Endothelial cell of umbilical vein (primary cell): ENCODE measurements at regions of chr16 and their contacts with region 1.

Region 1: GRCh38 chr16:72832621-72833248 is 215.2 kb downstream of the ZFHX3 start:
- DNase-seq: peak; percentile 78
- H3K4me3 ChIP-seq: no peak overlapping the region
- H3K27ac ChIP-seq: no peak overlapping the region
- H3K4me1 ChIP-seq: no peaks in the 10 kb centered on the region
- H3K27me3 ChIP-seq: no peaks in the 10 kb centered on the region
- CTCF ChIP-seq: peak; percentile 97 to 99
- POLR2A ChIP-seq: no peak

Region 2: DNA sequence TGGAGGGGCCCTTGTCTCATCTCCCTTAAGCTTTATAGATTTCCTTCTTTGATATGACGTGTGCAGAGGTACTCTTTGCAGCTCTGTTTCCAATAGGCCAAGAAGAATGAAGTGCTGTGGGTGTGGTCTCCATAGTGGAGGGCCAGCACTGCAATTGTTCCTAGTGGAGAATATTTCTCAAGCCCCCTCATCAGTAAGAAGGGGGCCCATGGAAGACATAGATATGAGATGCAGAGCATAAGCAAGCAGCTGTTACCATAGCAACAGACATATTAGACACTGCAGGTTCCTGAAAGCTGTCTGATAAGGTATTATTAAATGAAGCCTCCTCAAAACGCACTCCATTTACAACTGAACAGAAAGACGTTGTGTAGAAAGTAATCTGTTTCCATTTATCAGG is 25.5 kb before region 1 on chr16:
- CTCF ChIA-PET with region 1: interaction called, 11 read pairs
- POLR2A ChIA-PET with region 1: no interaction called
- dilution Hi-C with region 1: no loop called
- intact Hi-C with region 1: no loop called
- DNase-seq: no peak
- H3K4me3 ChIP-seq: no peak overlapping the region
- H3K27ac ChIP-seq: no peak overlapping the region
- H3K4me1 ChIP-seq: no peaks in the 10 kb centered on the region
- H3K27me3 ChIP-seq: no peaks in the 10 kb centered on the region
- CTCF ChIP-seq: no peak
- POLR2A ChIP-seq: no peak

Region 3: GRCh38 chr16:72856797-72857196 is 24.1 kb after region 1 on chr16:
- CTCF ChIA-PET with region 1: interaction called, 46 read pairs
- POLR2A ChIA-PET with region 1: no interaction called
- dilution Hi-C with region 1: no loop called
- intact Hi-C with region 1: no loop called
- DNase-seq: no peak
- H3K4me3 ChIP-seq: no peak overlapping the region
- H3K27ac ChIP-seq: no peak overlapping the region
- H3K4me1 ChIP-seq: no peaks in the 10 kb centered on the region
- H3K27me3 ChIP-seq: no peaks in the 10 kb centered on the region
- CTCF ChIP-seq: peak; percentile 28 to 46
- POLR2A ChIP-seq: no peak

Region 4: DNA sequence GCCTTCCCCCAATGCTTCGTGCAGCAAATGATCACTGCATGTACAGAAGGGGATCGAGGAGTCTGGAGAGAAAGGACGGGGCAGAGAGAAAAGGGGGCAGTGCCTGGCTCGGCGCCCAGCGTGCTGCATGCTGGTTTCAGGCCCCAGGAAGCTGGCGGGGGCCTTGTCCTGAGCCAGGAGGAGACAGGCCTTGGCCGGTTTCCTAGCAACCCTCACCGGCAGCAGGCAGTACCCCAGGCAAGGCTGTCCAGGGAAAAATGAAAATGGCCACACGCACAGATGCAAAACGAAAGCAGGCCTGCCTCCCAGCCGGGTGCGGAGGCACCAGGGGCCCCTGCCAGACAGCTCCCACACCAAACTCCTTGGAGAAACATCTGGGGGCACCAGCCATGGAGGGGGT is 88.9 kb after region 1 on chr16:
- CTCF ChIA-PET with region 1: no interaction called
- POLR2A ChIA-PET with region 1: no interaction called
- dilution Hi-C with region 1: no loop called
- intact Hi-C with region 1: no loop called
- DNase-seq: no peak
- H3K4me3 ChIP-seq: no peak overlapping the region
- H3K27ac ChIP-seq: no peak overlapping the region
- H3K4me1 ChIP-seq: no peaks in the 10 kb centered on the region
- H3K27me3 ChIP-seq: no peaks in the 10 kb centered on the region
- CTCF ChIP-seq: no peak
- POLR2A ChIP-seq: no peak

Region 5: DNA sequence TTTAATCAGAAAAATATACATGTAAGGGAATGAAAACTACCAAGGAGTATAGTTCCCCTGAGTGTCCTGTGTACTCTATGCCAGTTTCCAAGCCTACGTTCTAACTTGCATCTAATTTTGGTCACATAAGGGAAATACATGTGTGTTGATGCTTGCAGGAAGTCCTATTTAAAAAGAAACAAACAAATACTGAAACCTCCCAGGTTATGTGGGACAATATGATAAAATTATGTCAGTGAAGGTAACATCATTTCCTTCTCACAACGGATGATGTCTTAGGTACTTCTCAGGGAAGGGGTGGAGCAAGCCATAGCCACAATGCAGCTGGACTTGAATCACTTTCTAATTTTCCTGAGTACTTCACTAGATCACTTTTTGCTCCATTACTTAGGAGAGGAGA is 99.3 kb after region 1 on chr16:
- CTCF ChIA-PET with region 1: interaction called, 13 read pairs
- POLR2A ChIA-PET with region 1: no interaction called
- dilution Hi-C with region 1: no loop called
- intact Hi-C with region 1: no loop called
- DNase-seq: no peak
- H3K4me3 ChIP-seq: no peak overlapping the region
- H3K27ac ChIP-seq: no peak overlapping the region
- H3K4me1 ChIP-seq: peaks cover 14% of the 10 kb centered on the region
- H3K27me3 ChIP-seq: no peaks in the 10 kb centered on the region
- CTCF ChIP-seq: no peak
- POLR2A ChIP-seq: no peak

Region 6: GRCh38 chr16:73047518-73048291 is 215.0 kb after region 1 on chr16 and contains the start of gene ZFHX3:
- CTCF ChIA-PET with region 1: interaction called, 22 read pairs
- POLR2A ChIA-PET with region 1: no interaction called
- dilution Hi-C with region 1: no loop called
- intact Hi-C with region 1: loop called (anchors 2 kb)
- DNase-seq: peak; percentile 53
- H3K4me3 ChIP-seq: peak within 1 kb of the TSS; percentile 57 to 74 (median 70)
- H3K27ac ChIP-seq: peak within 1 kb of the TSS; percentile 54
- H3K4me1 ChIP-seq: peaks cover 25% of the 10 kb centered on the region
- H3K27me3 ChIP-seq: no peaks in the 10 kb centered on the region
- CTCF ChIP-seq: no peak
- POLR2A ChIP-seq: no peak
- total RNA-seq, gene ZFHX3: 17.7 and 18.8 TPM in 2 replicates

Region 7: DNA sequence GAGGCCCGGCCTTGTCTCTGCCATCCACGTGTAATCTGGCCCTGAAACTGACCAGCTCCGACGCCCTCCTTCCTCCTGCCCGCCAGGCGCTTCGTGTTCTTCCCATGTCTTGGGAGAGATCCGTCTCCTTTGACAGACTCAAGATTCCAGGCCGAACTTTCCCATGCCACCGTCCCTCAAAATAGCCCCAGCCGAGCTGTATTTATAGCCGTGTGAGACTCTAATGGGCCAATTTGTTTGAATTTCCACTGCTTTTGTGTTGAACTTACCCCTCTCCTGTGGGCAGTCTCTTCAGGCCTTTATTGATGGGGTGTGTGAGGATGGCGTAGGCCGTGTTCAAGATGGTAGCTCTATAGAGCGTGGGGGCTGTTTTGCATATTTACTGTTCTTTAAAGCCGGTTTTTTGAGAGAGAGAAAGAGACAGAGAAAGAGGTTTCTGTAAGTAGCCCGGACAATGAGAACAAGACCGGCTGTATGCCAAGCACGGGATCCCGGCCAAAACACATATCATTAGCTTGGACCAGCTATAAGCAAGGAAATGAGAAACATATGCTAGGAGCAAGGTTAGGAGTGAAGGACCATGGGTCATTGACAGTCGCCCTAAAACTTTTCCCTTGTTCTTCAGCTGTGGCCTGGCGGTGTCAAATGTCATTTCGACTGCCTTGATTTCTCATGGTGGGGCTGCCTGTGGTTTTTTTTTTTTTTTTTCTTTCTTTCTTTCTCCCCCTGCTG is 339.7 kb after region 1 on chr16:
- CTCF ChIA-PET with region 1: interaction called, 12 read pairs
- POLR2A ChIA-PET with region 1: no interaction called
- dilution Hi-C with region 1: no loop called
- intact Hi-C with region 1: loop called (anchors 1 kb)
- DNase-seq: peak; percentile 98
- H3K4me3 ChIP-seq: no peak overlapping the region
- H3K27ac ChIP-seq: peak overlapping the region; percentile 72
- H3K4me1 ChIP-seq: peaks cover 29% of the 10 kb centered on the region
- H3K27me3 ChIP-seq: no peaks in the 10 kb centered on the region
- CTCF ChIP-seq: peak; percentile 17 to 31
- POLR2A ChIP-seq: peak; percentile 55

Region 8: GRCh38 chr16:73956587-73957494 is 1124.1 kb after region 1 on chr16:
- CTCF ChIA-PET with region 1: interaction called, 12 read pairs
- POLR2A ChIA-PET with region 1: no interaction called
- dilution Hi-C with region 1: no loop called
- intact Hi-C with region 1: loop called (anchors 5 kb)
- DNase-seq: peak; percentile 53
- H3K4me3 ChIP-seq: no peak overlapping the region
- H3K27ac ChIP-seq: no peak overlapping the region
- H3K4me1 ChIP-seq: no peaks in the 10 kb centered on the region
- H3K27me3 ChIP-seq: no peaks in the 10 kb centered on the region
- CTCF ChIP-seq: peak; percentile 69 to 72
- POLR2A ChIP-seq: no peak